HEK293 (cell line): ENCODE measurements at regions of chr9 and their contacts with region 1.

Region 1: DNA sequence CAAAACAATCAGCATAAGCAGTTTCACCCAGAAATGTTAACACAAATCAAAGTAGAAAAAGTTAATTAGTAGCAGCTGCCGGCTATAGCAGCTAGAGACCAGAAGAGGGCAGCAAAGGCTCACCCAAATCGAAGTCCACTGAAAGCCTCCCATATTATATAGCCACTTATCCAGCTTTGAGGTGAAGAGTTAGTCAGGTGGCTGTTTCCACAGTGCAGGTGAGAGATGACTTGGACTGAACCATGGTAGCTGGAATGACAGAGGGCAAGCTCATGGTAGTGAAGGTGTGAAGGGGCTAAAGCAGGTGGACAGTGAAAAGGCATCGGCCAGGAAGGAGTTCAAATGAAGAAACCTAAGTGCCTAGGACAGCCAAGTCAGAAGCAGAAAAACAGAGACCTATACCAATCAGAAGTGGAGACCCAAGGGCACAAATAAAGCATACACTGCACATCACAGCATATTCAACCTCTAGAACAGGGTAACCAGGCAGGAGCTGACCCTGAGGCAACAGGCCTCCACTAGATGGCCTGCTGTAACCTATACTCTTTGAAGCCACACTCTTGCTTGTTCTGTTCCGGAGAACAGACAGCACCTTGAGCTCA is 7.2 kb upstream of the RNF38 start:
- H3K4me3 ChIP-seq: no peak overlapping the region
- H3K27ac ChIP-seq: no peak overlapping the region
- H3K4me1 ChIP-seq: no peaks in the 10 kb centered on the region
- CTCF ChIP-seq: peak; percentile 66

Region 2: DNA sequence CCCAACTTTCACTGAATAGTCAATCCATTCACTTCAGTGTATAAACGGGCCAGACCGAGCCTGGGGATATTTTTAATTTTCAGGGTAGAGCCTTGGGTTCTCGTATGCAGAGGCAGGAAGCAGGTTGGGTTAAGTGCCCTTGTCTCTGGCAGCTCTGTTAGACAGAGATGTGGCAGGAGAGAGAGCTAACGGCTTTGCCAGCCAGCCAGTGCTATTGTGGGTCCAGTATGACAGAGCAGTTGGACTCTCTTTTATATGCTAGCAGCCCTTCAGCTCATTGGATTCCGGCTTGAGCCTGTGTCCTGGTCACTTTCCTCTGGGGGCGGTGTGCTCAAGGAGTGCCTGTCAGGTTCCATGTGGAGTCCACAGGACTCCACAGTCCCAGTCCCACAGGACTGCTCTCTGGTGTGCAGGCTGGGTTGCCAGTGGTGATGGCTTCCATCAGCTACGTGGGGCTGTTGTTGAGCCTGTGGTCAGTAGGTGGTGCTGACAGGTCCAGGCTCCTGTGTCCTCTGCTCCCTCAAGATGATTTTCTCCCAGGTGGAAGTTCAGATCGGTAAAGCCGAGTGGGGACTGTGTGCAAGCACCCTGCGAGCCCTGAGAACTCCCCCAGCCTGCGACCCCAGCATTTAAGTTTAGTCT is 202.2 kb before region 1 on chr9:
- CTCF ChIA-PET with region 1: no interaction called
- POLR2A ChIA-PET with region 1: no interaction called
- H3K4me3 ChIP-seq: no peak overlapping the region
- H3K27ac ChIP-seq: no peak overlapping the region
- H3K4me1 ChIP-seq: no peaks in the 10 kb centered on the region
- CTCF ChIP-seq: no peak

Region 3: DNA sequence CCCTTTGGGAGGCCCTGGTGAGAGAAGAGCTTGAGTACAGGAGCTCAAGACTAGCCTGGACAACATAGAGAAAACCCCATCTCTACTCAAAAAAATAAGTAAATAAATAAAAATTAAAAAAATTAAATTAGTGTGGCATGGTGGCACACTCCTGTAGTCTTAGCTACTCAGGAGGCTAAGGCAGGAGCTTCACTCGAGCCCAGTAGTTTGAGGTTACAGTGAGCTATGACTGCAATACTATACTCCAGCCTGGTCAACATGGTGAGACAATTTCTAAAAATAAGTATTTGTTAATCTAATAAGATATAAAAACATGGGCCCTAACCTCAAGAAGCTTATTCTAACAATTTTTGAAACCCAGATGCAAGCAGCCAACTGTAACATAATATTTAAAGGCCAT is 14.7 kb before region 1 on chr9:
- CTCF ChIA-PET with region 1: interaction called, 20 read pairs
- POLR2A ChIA-PET with region 1: interaction called, 3 read pairs
- H3K4me3 ChIP-seq: no peak overlapping the region
- H3K27ac ChIP-seq: no peak overlapping the region
- H3K4me1 ChIP-seq: no peaks in the 10 kb centered on the region; the same call in 1 of the 2 replicates
- CTCF ChIP-seq: no peak

Region 4: DNA sequence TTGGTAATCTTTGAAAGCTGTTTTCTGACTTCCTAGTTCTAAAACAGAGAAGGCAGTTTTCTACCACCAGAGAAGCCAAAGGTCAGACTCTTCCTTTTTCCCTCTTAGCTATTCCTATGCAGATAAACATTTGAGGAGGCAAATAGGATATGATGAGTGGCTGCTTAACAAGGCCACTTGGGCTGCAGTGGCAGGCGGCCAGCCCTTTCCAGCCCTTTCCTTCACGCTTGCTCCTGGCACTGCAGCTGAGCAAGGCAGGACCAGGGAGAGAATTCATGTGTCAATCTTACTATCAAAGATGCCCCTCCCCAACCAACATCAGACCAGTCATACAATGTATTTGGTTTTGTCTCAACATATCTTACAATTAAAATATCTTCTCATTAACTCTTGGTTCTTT is 29.7 kb after region 1 on chr9:
- CTCF ChIA-PET with region 1: interaction called, 29 read pairs
- POLR2A ChIA-PET with region 1: no interaction called
- H3K4me3 ChIP-seq: no peak overlapping the region
- H3K27ac ChIP-seq: no peak overlapping the region
- H3K4me1 ChIP-seq: no peaks in the 10 kb centered on the region
- CTCF ChIP-seq: no peak

Region 5: DNA sequence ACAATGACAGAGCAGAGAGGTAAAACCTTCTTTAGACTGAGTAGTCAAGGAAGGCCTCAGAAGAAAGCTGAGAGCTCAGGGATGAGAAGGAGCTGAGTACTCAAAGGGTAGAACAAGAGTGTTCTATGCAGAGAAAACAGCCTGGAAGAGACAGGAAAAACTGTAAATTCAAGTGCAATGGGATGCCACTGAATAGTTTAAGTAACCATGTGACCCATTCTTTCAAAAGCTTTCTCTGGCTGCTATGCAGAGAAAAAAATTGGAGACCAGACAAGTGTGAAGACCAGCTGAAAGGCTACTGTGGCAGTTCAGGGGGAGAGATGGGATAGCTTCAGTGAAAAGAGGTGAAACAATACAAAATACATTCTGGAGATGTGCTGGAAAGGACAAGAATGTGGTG is 54.1 kb after region 1 on chr9:
- CTCF ChIA-PET with region 1: interaction called, 32 read pairs
- POLR2A ChIA-PET with region 1: no interaction called
- H3K4me3 ChIP-seq: no peak overlapping the region
- H3K27ac ChIP-seq: no peak overlapping the region
- H3K4me1 ChIP-seq: no peaks in the 10 kb centered on the region
- CTCF ChIP-seq: no peak

Region 6: DNA sequence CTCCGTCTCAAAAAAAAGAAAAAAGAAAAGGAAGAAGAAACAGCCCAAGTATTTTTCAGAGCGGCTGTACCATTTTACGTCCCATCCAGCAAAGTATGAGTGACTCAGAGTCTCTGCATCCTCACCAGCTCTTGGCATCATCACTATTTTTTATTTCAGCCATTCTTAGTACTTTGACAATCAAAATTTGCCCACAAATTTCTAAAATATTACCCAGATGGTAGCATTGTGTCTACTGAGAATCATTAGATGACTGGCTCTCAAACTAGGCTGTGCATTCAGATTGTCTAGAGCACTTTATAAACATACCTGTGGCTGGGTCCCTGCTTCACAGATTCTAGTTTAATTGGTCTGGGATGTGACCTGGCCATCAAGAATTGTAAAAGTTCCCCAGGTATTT is 143.9 kb after region 1 on chr9:
- CTCF ChIA-PET with region 1: interaction called, 161 read pairs
- POLR2A ChIA-PET with region 1: interaction called, 4 read pairs
- H3K4me3 ChIP-seq: no peak overlapping the region
- H3K27ac ChIP-seq: no peak overlapping the region
- H3K4me1 ChIP-seq: no peaks in the 10 kb centered on the region
- CTCF ChIP-seq: no peak

Region 7: DNA sequence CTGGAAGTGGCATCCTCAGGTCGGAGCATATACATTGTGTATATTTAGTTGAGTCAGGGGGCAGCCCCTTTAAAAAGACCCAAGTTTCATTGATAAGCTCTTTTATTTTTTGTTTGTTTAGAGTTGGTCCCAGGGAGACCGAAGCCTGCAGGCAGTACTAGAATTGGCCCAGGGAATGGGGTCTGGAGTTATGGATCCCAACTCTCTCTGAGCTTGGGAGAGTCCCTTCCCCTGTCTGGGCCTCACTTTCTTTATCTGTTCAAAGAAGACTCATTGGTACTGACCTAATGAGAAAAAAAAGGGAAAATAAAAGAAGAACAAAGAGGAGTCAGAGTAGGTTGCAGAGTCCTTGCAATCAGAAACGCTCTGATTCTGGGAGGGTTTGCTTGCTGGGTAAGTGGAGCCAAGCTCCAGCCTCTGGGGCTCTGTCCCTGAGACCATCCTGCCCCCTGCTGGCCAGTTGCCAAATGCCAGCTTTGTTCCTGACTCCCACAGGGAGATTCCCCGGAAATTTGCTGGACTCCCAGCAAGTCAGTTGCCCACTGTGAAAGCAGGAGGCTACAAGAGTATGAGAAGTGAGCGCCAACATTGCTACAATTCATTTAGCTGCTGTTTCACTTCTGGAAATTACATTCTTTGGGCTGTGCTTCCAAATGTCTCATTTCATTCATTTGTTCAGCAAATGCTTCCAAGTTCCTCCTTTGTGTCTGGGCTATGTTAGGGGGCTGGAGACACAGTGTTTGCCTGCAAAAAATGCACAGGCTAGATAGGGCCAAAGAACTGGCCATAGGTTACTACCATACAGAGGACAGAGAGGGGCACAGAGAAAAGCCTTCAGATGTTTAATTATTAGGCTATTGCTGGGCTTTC is 321.7 kb after region 1 on chr9:
- CTCF ChIA-PET with region 1: interaction called, 55 read pairs
- POLR2A ChIA-PET with region 1: no interaction called
- H3K4me3 ChIP-seq: no peak overlapping the region
- H3K27ac ChIP-seq: no peak overlapping the region
- H3K4me1 ChIP-seq: no peaks in the 10 kb centered on the region
- CTCF ChIP-seq: peak; percentile 58; the same call in 1 of the 2 replicates

Region 8: DNA sequence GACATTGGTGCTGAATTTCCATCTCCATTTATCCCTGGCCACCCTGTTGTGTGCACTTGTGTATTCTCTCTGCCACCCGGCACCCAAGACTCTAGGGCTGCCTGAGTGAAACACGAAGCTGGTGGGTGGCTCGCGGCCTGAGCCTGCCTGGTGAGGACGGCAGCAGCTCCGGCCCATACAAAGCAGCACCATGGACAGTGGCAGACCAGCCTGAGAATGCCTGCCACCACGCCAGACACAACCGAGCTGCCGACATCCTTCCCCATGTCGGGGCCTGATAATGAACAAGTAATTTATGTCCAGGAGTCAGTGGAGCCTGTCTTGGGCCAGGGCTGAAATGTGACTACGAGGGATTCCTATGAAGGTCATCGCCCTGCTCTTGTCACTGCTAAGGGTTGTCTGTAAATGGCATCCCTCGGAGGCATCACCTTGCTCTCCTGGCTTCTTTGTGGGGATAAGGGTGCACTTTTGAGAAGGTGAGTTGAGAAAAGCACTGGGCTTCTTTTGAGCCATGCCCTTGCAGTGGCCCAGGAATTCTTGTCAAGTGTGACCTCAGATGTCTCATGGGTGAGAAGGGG is 341.2 kb after region 1 on chr9:
- CTCF ChIA-PET with region 1: no interaction called
- POLR2A ChIA-PET with region 1: no interaction called
- H3K4me3 ChIP-seq: no peak overlapping the region
- H3K27ac ChIP-seq: no peak overlapping the region
- H3K4me1 ChIP-seq: no peaks in the 10 kb centered on the region
- CTCF ChIP-seq: no peak